A673 (cell line): ENCODE measurements at regions of chr10 and their contacts with region 1.

Region 1: GRCh38 chr10:80382989-80383388 is 25.4 kb upstream of the PRXL2A start:
- DNase-seq: peak; percentile 62
- H3K4me3 ChIP-seq: no peak overlapping the region
- H3K27ac ChIP-seq: no peak overlapping the region
- H3K4me1 ChIP-seq: no peaks in the 10 kb centered on the region
- H3K27me3 ChIP-seq: no peaks in the 10 kb centered on the region
- CTCF ChIP-seq: peak; percentile 71

Region 2: DNA sequence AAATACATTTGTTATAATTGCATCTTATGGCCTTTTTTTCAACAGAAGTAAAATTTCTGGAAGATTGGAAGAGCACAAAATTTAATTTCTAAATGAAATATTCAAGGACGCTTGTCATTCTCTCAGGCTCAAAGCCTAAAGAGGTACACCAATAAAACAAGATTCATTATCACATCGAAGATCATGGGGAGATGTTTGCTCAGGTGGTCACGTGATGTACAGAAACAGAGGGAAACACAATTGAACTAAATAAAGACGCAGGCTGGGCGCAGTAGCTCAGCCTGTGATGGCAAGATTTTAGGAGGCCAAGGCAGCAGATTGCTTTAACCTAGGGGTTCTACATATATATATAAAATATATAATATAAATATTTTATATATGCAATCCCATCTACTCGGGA is 341.8 kb before region 1 on chr10:
- CTCF ChIA-PET with region 1: no interaction called
- POLR2A ChIA-PET with region 1: no interaction called
- intact Hi-C with region 1: no loop called
- DNase-seq: no peak
- H3K4me3 ChIP-seq: no peak overlapping the region
- H3K27ac ChIP-seq: no peak overlapping the region
- H3K4me1 ChIP-seq: no peaks in the 10 kb centered on the region
- H3K27me3 ChIP-seq: no peaks in the 10 kb centered on the region
- CTCF ChIP-seq: no peak

Region 3: GRCh38 chr10:80599424-80599847 is 216.4 kb after region 1 on chr10:
- CTCF ChIA-PET with region 1: interaction called, 6 read pairs
- POLR2A ChIA-PET with region 1: no interaction called
- intact Hi-C with region 1: loop called (anchors 5 kb)
- DNase-seq: peak; percentile 82
- H3K4me3 ChIP-seq: no peak overlapping the region
- H3K27ac ChIP-seq: no peak overlapping the region
- H3K4me1 ChIP-seq: no peaks in the 10 kb centered on the region
- H3K27me3 ChIP-seq: no peaks in the 10 kb centered on the region
- CTCF ChIP-seq: peak; percentile 89